ENCODE measurements at regions of chr11 and their contacts with region 1.

Region 1: GRCh38 chr11:30917859-30918478 is 331.8 kb upstream of the MPPED2 start:
- DNase-seq: peak; percentile 58
- H3K4me3 Mint-ChIP-seq: no peak overlapping the region
- H3K27ac Mint-ChIP-seq: no peak overlapping the region
- H3K4me1 Mint-ChIP-seq: no peaks in the 10 kb centered on the region
- H3K27me3 Mint-ChIP-seq: peaks cover 84% of the 10 kb centered on the region
- CTCF ChIP-seq: peak; percentile 54

Region 2: GRCh38 chr11:29343465-29344333 is 1574.3 kb before region 1 on chr11:
- CTCF ChIA-PET with region 1: no interaction called
- POLR2A ChIA-PET with region 1: no interaction called
- intact Hi-C with region 1: loop called (anchors 5 kb)
- DNase-seq: peak; percentile 63
- H3K4me3 Mint-ChIP-seq: no peak overlapping the region
- H3K27ac Mint-ChIP-seq: no peak overlapping the region
- H3K4me1 Mint-ChIP-seq: no peaks in the 10 kb centered on the region
- H3K27me3 Mint-ChIP-seq: no peaks in the 10 kb centered on the region
- CTCF ChIP-seq: peak; percentile 89

Region 3: DNA sequence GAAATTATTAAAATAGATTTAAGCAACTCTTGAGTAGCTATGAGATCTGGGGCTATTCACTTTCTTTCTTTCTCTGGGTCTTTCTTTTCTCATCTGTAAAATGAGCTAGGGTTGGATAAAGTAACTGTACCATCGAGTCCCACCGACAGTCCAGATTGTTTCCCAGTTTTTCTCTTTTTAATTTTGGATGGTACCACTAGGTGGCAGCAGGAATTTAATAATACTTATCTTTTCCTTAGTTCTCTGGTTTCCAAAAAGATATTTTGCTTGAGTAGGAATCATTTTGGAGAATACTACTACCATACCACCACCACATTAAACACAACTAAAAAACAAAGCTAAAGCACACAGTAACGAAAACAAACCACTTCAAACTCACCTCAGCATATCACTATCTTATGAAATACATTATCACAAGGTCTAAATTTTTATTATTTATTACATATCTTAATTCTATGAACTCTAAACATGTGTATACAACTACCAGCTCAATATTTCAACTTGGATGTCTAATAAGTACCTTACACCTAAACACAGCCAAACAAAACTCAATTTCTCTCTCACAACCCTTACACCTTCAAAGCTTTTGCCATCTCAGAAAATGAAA is 1485.1 kb before region 1 on chr11:
- CTCF ChIA-PET with region 1: interaction called, 7 read pairs
- POLR2A ChIA-PET with region 1: no interaction called
- intact Hi-C with region 1: loop called (anchors 2 kb)
- DNase-seq: peak; percentile 47
- H3K4me3 Mint-ChIP-seq: no peak overlapping the region
- H3K27ac Mint-ChIP-seq: no peak overlapping the region
- H3K4me1 Mint-ChIP-seq: peaks cover 8% of the 10 kb centered on the region
- H3K27me3 Mint-ChIP-seq: no peaks in the 10 kb centered on the region
- CTCF ChIP-seq: peak; percentile 69

Region 4: GRCh38 chr11:29448246-29448877 is 1469.6 kb before region 1 on chr11:
- CTCF ChIA-PET with region 1: no interaction called
- POLR2A ChIA-PET with region 1: no interaction called
- intact Hi-C with region 1: loop called (anchors 5 kb)
- DNase-seq: peak; percentile 30
- H3K4me3 Mint-ChIP-seq: no peak overlapping the region
- H3K27ac Mint-ChIP-seq: no peak overlapping the region
- H3K4me1 Mint-ChIP-seq: no peaks in the 10 kb centered on the region
- H3K27me3 Mint-ChIP-seq: no peaks in the 10 kb centered on the region
- CTCF ChIP-seq: peak; percentile 66

Region 5: GRCh38 chr11:30016588-30017363 is 901.2 kb before region 1 on chr11 and contains the start of gene KCNA4:
- CTCF ChIA-PET with region 1: no interaction called
- POLR2A ChIA-PET with region 1: no interaction called
- intact Hi-C with region 1: no loop called
- DNase-seq: no peak
- H3K4me3 Mint-ChIP-seq: no peak within 1 kb of the TSS
- H3K27ac Mint-ChIP-seq: no peak within 1 kb of the TSS
- H3K4me1 Mint-ChIP-seq: no peaks in the 10 kb centered on the region
- H3K27me3 Mint-ChIP-seq: no peaks in the 10 kb centered on the region
- CTCF ChIP-seq: no peak
- total RNA-seq, gene KCNA4: not detected in 2 replicates

Region 6: GRCh38 chr11:30346068-30346688 is 571.8 kb before region 1 on chr11:
- CTCF ChIA-PET with region 1: interaction called, 22 read pairs
- POLR2A ChIA-PET with region 1: no interaction called
- intact Hi-C with region 1: loop called (anchors 1 kb)
- DNase-seq: peak; percentile 71
- H3K4me3 Mint-ChIP-seq: no peak overlapping the region
- H3K27ac Mint-ChIP-seq: no peak overlapping the region
- H3K4me1 Mint-ChIP-seq: no peaks in the 10 kb centered on the region
- H3K27me3 Mint-ChIP-seq: peaks cover 21% of the 10 kb centered on the region
- CTCF ChIP-seq: peak; percentile 42

Region 7: DNA sequence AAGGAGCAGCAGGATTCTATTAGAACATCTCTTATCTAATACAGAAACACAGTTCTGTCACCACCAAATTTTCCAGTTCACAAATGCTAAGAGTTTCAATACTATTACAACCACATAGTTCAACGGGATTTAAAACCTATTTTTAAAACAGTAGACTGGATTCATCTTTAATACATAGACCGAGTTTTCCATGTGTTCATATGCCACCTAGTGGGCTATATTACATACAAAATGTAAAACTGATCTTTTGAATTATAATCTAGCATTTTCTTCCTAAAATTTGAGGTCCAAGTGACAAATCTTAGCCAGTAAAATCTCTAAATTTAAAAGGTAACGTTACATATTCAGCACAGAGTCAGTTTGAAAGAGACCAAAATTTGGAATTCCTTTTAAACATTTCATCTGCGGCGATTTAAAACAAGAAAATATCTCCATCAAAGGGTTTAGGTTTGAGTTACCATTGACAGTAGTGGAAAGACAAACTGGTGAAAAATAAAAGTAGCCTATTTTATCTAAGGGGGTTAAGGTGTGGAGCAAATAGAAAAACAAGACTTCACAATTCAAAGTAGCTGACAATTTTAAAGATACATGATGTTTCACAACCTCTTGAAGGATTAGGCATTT is 62.5 kb before region 1 on chr11:
- CTCF ChIA-PET with region 1: interaction called, 6 read pairs
- POLR2A ChIA-PET with region 1: no interaction called
- intact Hi-C with region 1: loop called (anchors 5 kb)
- DNase-seq: peak; percentile 9
- H3K4me3 Mint-ChIP-seq: no peak overlapping the region
- H3K27ac Mint-ChIP-seq: no peak overlapping the region
- H3K4me1 Mint-ChIP-seq: no peaks in the 10 kb centered on the region
- H3K27me3 Mint-ChIP-seq: peaks cover 63% of the 10 kb centered on the region
- CTCF ChIP-seq: peak; percentile 8

Region 8: GRCh38 chr11:30902929-30903328 is 15.0 kb before region 1 on chr11:
- CTCF ChIA-PET with region 1: interaction called, 17 read pairs
- POLR2A ChIA-PET with region 1: no interaction called
- intact Hi-C with region 1: no loop called
- DNase-seq: no peak
- H3K4me3 Mint-ChIP-seq: no peak overlapping the region
- H3K27ac Mint-ChIP-seq: no peak overlapping the region
- H3K4me1 Mint-ChIP-seq: no peaks in the 10 kb centered on the region
- H3K27me3 Mint-ChIP-seq: peaks cover 89% of the 10 kb centered on the region
- CTCF ChIP-seq: no peak

Measured in MCF 10A (cell line).